ENCODE measurements at regions of chr7 and their contacts with region 1.

Region 1: GRCh38 chr7:109044691-109045090 is 475.0 kb downstream of the DNAJB9 start:
- DNase-seq: no peak
- ATAC-seq: no peak

Region 2: DNA sequence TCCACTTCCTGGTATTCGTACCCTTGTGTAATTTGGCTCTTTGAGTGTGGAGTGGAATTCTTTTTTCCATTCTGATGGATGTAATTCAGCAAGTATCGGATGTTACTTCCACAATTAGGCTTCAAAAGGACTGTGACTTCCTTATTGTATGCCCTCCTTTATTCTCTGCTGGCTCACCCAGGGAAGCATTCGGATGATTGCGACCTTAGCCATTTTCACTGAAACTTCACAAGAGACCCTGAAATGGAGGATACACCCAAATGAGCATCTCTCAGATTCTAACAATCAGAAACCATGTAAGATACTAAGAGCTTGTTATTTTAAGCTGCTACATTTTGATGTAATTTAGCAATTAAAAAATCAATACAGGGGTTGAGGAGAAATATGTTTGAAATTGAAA is 18.1 kb after region 1 on chr7:
- intact Hi-C with region 1: loop called (anchors 2 kb)
- DNase-seq: no peak
- ATAC-seq: no peak

Region 3: GRCh38 chr7:109295158-109295557 is 250.5 kb after region 1 on chr7:
- intact Hi-C with region 1: no loop called
- DNase-seq: no peak
- ATAC-seq: no peak